Activated CD4-positive, alpha-beta T cell treated with anti-CD3 and anti-CD28 coated beads, Interleukin-2, amount 10 ng/mL, durations not matched to agents 24 days and 14 days (primary cell): ENCODE measurements at regions of chr18 and their contacts with region 1.

Region 1: GRCh38 chr18:34976899-34977837 is 64.0 kb upstream of the MAPRE2 start:
- DNase-seq: peak; percentile 90
- H3K4me3 Mint-ChIP-seq: peak overlapping the region; percentile 82
- H3K27ac Mint-ChIP-seq: no peak overlapping the region
- H3K4me1 Mint-ChIP-seq: peaks cover 23% of the 10 kb centered on the region
- H3K27me3 Mint-ChIP-seq: peaks cover 39% of the 10 kb centered on the region

Region 2: DNA sequence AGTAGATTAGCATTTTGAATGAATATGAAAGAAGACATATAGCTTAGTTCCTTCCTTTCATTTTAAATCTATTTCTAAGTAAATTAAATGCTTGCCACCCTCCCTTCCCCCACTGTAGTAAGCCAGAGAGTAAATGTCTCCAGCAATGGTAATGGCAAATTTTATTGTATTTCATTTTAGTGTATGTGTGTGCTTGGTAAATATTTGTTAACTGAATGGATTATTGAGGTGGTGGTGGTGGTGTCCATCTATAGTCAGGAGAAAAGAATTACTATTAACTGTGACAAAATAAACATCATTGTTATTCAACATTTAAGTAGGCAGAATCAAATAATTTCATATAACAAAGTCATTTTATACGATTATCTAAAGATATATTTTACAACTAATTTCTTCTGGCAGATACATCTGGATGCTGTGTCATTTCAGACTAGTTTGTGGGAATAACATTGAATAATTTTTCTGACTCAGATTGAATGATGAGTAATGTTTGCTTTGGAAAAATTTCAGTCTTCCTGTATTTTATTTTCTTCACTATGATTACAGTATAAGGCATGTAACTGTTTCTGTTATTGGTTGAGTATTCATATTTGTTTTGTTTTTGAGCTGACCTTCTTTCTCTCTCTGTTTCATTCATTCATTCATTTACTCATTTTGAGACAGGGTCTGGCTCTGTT is 1380.9 kb before region 1 on chr18:
- intact Hi-C with region 1: no loop called
- DNase-seq: no peak
- H3K4me3 Mint-ChIP-seq: no peak overlapping the region
- H3K27ac Mint-ChIP-seq: no peak overlapping the region
- H3K4me1 Mint-ChIP-seq: no peaks in the 10 kb centered on the region
- H3K27me3 Mint-ChIP-seq: no peaks in the 10 kb centered on the region

Region 3: GRCh38 chr18:34857320-34857719 is 119.8 kb before region 1 on chr18:
- intact Hi-C with region 1: loop called (anchors 1 kb)
- DNase-seq: no peak
- H3K4me3 Mint-ChIP-seq: no peak overlapping the region
- H3K27ac Mint-ChIP-seq: no peak overlapping the region
- H3K4me1 Mint-ChIP-seq: peaks cover 7% of the 10 kb centered on the region
- H3K27me3 Mint-ChIP-seq: peaks cover 32% of the 10 kb centered on the region

Region 4: DNA sequence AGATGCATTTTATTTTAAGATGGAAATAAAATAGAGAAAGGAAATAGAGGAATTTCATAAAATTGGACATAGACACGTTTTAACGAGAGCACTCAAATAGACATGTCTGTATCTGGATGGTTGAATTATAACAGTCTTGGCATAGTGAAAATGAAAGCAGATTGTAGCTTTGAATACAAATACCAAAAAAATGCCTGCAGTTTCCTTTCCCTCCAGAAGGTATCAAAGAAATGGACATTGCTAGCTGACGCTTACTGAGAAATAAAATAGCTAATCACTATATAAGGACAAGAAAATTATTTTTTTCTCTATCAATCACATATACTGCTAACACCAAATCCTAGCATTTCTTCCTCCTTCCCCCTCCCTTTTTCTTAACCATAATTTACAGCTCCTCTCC is 52.6 kb after region 1 on chr18:
- intact Hi-C with region 1: loop called (anchors 5 kb)
- DNase-seq: no peak
- H3K4me3 Mint-ChIP-seq: peak overlapping the region; percentile 89
- H3K27ac Mint-ChIP-seq: peak overlapping the region; percentile 97
- H3K4me1 Mint-ChIP-seq: peaks cover 40% of the 10 kb centered on the region
- H3K27me3 Mint-ChIP-seq: no peaks in the 10 kb centered on the region

Region 5: DNA sequence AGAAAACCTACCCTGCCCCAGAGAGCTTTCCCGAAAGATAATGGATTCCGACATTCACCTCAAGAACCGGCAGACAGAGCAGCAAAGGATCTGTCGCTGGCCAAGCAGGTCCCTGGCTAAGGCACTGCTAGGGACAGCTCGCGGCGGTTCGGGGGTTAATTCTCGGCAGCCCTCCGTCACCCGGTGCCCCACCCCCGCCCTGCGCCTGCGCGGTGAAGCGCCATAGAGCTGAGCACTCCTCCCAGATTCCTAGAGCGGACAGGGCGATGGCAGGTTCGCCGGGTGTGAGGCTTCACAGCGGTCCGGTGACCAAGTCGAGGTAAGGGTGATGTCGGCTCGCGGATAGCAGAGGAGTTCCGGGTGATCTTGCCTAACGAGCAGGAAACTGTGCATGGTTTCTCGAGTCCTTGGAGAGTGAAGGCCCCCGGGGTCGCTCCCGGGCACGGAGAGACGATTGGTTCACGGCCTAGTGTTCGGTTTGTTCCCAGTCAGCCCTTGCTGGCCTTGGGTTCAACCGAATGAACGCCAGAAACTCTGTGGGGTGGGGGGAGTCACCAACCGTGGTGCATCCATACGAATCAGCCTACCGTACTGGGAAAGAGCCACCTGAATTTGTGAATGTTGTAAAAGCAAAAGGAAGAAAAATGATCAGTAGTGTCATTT is 313.0 kb after region 1 on chr18 and contains the start of gene ZSCAN30:
- intact Hi-C with region 1: loop called (anchors 5 kb)
- DNase-seq: peak; percentile 99
- H3K4me3 Mint-ChIP-seq: peak within 1 kb of the TSS; percentile 100
- H3K27ac Mint-ChIP-seq: peak within 1 kb of the TSS; percentile 95
- H3K4me1 Mint-ChIP-seq: peaks cover 37% of the 10 kb centered on the region
- H3K27me3 Mint-ChIP-seq: no peaks in the 10 kb centered on the region
- total RNA-seq, gene ZSCAN30: 11.6 and 12.2 TPM in 2 replicates

Region 6: DNA sequence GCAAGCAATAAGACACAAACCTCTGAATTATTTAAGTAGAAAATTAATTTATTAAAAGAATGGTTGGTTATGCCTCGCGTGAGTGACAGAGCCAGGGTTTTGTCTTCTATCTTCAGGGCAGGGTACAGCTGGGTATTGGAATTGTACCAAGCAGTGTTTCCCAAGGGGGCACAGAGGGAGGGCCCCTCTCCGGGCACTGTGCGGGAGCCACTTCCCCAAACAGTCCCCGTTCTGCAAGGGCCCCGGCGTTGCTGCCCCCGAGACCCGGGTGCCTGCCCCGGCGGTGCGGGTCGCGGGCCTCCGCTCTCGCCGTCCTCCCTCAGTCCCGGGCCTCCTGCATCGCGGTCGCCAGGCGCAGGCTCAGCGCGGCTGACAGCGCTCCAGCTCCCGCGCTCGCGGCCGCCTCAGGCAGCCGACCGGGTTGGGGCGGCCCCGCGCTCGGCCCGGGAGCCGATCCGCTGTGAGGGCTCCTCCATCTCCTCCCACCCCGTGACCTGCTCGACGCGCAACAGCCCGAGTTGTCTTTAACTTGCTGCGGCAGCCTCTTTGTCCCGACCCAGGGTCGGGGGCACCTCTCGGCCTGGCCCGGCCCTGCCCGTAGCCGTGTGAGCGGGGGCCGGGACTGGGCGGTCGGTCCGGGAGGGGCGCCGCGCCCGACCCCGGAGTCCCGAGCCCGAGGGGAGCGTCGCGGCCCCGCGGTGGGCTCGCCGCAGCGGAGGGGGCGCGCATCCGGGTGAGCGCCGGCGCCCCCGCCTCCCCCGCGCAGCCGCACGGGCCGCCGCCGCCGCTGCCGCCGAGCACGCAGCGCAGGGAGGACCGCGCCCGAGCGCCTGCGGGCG is 603.8 kb after region 1 on chr18:
- intact Hi-C with region 1: loop called (anchors 10 kb)
- DNase-seq: peak; percentile 86
- H3K4me3 Mint-ChIP-seq: peak overlapping the region; percentile 73
- H3K27ac Mint-ChIP-seq: peak overlapping the region; percentile 66
- H3K4me1 Mint-ChIP-seq: peaks cover 22% of the 10 kb centered on the region
- H3K27me3 Mint-ChIP-seq: peaks cover 12% of the 10 kb centered on the region